Endothelial cell of umbilical vein (primary cell): ENCODE measurements at regions of chr2 and their contacts with region 1.

Region 1: DNA sequence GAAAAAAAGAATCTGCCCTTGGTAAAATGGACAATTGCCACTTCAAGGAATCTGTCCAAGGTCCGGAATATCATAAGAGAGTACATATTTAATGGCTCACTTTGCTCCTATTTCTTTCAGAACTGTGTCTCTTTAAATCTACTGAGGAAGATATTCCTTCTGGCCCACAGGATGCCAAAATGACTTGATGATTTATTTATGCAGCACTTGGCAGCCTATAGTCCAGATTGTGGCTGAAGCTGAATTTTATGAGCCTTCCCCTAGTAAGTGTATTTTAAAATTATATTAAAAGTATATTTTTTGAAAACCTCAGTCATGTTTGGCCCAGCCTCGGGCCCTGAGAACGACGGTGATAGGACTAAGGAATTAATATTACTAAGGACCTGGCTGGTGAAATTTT is 465.1 kb upstream of the HNRNPA3 start:
- DNase-seq: no peak
- H3K4me3 ChIP-seq: no peak overlapping the region
- H3K27ac ChIP-seq: no peak overlapping the region
- H3K4me1 ChIP-seq: no peaks in the 10 kb centered on the region
- H3K27me3 ChIP-seq: no peaks in the 10 kb centered on the region
- CTCF ChIP-seq: no peak
- POLR2A ChIP-seq: no peak

Region 2: DNA sequence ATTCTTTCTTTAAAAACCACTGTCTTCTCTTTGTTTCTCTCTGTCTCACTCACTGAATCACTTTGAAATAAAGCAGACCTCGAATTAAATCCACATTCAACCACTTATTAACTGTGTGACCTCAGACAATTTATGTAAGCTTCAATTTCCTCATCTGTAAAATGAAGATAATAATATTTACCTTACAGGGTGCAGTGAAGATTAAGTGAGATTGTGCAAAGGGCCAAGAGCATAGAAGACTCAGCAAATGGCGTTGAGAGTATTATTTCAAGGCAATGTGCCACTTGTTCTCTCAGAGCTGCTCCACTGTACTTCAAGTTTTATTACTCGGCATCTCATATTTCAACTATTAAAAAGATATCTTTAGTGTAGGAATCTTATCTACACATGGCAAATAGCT is 10.9 kb after region 1 on chr2:
- CTCF ChIA-PET with region 1: interaction called, 10 read pairs
- POLR2A ChIA-PET with region 1: no interaction called
- dilution Hi-C with region 1: no loop called
- intact Hi-C with region 1: no loop called
- DNase-seq: no peak
- H3K4me3 ChIP-seq: no peak overlapping the region
- H3K27ac ChIP-seq: no peak overlapping the region
- H3K4me1 ChIP-seq: no peaks in the 10 kb centered on the region
- H3K27me3 ChIP-seq: peaks cover 0 to 4% of the 10 kb centered on the region in 2 experiments
- CTCF ChIP-seq: no peak
- POLR2A ChIP-seq: no peak